Activated CD4-positive, alpha-beta T cell treated with anti-CD3 and anti-CD28 coated beads for 36 hours (primary cell): ENCODE measurements at regions of chr6 and their contacts with region 1.

Region 1: GRCh38 chr6:20599302-20600051 is 65.2 kb downstream of the CDKAL1 start:
- DNase-seq: no peak
- ATAC-seq: peak; percentile 97
- H3K4me3 Mint-ChIP-seq: no peak overlapping the region
- H3K27ac Mint-ChIP-seq: no peak overlapping the region
- H3K4me1 Mint-ChIP-seq: peaks cover 11% of the 10 kb centered on the region
- H3K27me3 Mint-ChIP-seq: no peaks in the 10 kb centered on the region

Region 2: GRCh38 chr6:20569000-20569610 is 30.4 kb before region 1 on chr6:
- CTCF ChIA-PET with region 1: no interaction called
- POLR2A ChIA-PET with region 1: no interaction called
- intact Hi-C with region 1: no loop called
- DNase-seq: no peak
- ATAC-seq: no peak
- H3K4me3 Mint-ChIP-seq: no peak overlapping the region
- H3K27ac Mint-ChIP-seq: no peak overlapping the region
- H3K4me1 Mint-ChIP-seq: peaks cover 20% of the 10 kb centered on the region
- H3K27me3 Mint-ChIP-seq: no peaks in the 10 kb centered on the region

Region 3: DNA sequence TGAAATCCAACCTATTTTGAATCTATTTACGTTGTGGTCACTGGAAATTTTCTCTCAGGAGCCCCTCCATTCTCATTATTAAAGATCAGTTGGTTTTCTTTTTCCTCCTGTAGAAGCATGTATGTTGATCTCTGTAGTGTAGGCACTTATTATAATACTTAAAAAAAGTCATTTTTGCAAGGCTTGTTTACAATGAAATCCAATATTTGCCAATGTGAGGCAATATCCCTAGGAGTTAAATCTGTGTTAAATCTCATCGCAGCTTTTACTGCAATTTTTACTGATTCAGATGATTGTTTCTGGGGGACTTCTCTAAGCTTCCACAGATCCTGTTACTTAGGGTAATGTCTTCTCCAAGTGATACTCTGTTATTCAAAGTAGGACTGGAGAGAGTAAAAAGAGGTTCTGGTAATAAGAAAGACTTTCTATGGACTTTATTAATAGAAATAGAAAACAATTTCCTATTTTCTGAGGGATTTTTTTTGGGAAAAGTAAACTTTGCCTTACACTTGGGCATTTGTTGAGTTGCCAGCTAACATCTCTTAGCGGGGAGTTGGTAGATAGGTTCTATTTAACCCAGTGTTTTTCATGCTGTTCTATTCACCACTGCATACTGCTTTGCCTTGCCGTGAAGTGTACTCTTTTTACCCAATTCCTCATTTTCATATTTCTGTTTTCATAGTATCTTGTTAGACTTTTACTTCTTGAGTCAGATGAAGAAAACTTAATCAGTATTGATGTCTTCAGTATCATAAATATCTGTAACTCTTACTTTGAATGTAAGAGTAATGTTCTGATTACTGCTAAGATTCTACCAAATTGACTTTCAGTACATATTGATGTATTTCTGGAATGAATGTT is 16.7 kb before region 1 on chr6:
- CTCF ChIA-PET with region 1: no interaction called
- POLR2A ChIA-PET with region 1: no interaction called
- intact Hi-C with region 1: loop called in 1 of 2 experiments (anchors 1 kb)
- DNase-seq: no peak
- ATAC-seq: peak; percentile 86
- H3K4me3 Mint-ChIP-seq: no peak overlapping the region
- H3K27ac Mint-ChIP-seq: no peak overlapping the region
- H3K4me1 Mint-ChIP-seq: peaks cover 26% of the 10 kb centered on the region
- H3K27me3 Mint-ChIP-seq: no peaks in the 10 kb centered on the region

Region 4: GRCh38 chr6:20630617-20631548 is 31.4 kb after region 1 on chr6:
- CTCF ChIA-PET with region 1: no interaction called
- POLR2A ChIA-PET with region 1: no interaction called
- intact Hi-C with region 1: loop called in 1 of 2 experiments (anchors 2 kb)
- DNase-seq: peak; percentile 46
- ATAC-seq: peak; percentile 91
- H3K4me3 Mint-ChIP-seq: no peak overlapping the region
- H3K27ac Mint-ChIP-seq: peak overlapping the region; percentile 35
- H3K4me1 Mint-ChIP-seq: peaks cover 30% of the 10 kb centered on the region
- H3K27me3 Mint-ChIP-seq: no peaks in the 10 kb centered on the region

Region 5: DNA sequence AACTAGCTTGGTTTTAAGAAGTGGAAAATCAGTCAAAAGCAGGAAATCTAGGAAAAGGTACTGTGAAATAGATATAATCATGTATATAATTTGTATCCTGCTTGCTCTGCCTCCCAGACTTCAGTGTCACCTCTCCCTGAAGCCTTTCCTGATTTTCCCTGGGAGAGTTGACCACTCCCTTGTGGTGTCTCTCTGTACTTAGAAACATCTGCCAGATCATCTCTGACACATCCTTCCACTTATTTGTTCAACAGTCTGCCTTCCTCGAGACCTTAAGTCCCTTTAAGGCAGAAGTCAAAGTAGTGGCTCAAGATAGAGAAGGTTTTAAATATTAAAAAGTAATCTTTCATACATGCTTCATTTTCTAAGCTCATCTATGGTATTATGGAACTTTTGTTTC is 171.3 kb after region 1 on chr6:
- CTCF ChIA-PET with region 1: no interaction called
- POLR2A ChIA-PET with region 1: no interaction called
- intact Hi-C with region 1: no loop called
- DNase-seq: no peak
- ATAC-seq: no peak
- H3K4me3 Mint-ChIP-seq: no peak overlapping the region
- H3K27ac Mint-ChIP-seq: no peak overlapping the region
- H3K4me1 Mint-ChIP-seq: no peaks in the 10 kb centered on the region
- H3K27me3 Mint-ChIP-seq: no peaks in the 10 kb centered on the region

Region 6: GRCh38 chr6:21402368-21402767 is 802.9 kb after region 1 on chr6:
- CTCF ChIA-PET with region 1: no interaction called
- POLR2A ChIA-PET with region 1: no interaction called
- intact Hi-C with region 1: loop called in 1 of 2 experiments (anchors 1 kb)
- DNase-seq: peak; percentile 70
- ATAC-seq: peak; percentile 96
- H3K4me3 Mint-ChIP-seq: no peak overlapping the region
- H3K27ac Mint-ChIP-seq: no peak overlapping the region
- H3K4me1 Mint-ChIP-seq: peaks cover 13% of the 10 kb centered on the region
- H3K27me3 Mint-ChIP-seq: peaks cover 4% of the 10 kb centered on the region